ENCODE measurements at regions of chr4 and their contacts with region 1.

Region 1: DNA sequence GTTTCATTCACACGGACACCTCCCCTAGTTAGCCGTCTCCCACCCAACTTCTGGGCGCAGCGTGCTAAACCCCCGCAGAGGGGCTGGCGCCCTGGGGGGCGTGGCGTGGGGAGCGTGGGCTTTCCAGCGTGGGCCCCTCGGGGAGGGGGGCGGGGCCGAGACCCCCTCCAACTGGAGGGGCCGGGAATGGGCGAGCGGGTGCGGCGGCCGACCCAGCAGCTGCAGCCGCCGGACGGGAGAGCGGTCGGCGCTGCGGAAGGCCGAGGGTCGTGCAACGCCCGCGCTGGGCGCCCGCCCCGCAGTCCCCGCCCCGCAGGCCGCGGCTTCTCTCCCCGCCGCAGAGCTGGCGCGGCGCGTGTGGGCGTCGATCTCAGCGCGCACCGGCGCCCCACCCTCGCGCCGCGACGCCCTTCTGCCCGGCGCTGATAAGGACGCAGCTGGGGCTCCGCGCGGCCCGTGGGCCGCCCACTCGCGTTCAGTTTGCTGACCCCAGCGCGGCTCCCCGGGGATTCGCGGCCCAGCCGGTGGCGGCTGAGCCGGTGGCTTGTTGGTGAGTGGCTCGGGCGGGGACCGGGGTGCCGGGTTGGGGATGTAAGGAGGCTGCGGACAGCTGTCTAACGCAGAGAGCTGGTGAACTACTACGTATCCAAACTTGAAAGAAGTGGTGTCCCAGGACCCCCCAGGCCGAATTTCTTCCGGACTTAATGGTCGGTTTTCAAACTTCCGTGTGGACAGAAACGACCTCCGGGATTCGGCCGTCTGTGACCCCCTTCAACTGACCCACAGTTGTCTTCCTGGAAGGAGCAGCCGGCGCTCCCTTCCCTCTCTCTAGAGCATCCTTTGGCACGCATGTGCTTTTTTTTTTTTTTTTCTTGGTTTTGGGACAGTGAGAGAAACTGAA is 1.5 kb downstream of the FHDC1 start:
- DNase-seq: peak; percentile 35
- ATAC-seq: no peak
- H3K4me3 Mint-ChIP-seq: peak overlapping the region; percentile 59
- H3K27ac Mint-ChIP-seq: no peak overlapping the region
- H3K4me1 Mint-ChIP-seq: peaks cover 15% of the 10 kb centered on the region
- H3K27me3 Mint-ChIP-seq: peaks cover 48% of the 10 kb centered on the region

Region 2: DNA sequence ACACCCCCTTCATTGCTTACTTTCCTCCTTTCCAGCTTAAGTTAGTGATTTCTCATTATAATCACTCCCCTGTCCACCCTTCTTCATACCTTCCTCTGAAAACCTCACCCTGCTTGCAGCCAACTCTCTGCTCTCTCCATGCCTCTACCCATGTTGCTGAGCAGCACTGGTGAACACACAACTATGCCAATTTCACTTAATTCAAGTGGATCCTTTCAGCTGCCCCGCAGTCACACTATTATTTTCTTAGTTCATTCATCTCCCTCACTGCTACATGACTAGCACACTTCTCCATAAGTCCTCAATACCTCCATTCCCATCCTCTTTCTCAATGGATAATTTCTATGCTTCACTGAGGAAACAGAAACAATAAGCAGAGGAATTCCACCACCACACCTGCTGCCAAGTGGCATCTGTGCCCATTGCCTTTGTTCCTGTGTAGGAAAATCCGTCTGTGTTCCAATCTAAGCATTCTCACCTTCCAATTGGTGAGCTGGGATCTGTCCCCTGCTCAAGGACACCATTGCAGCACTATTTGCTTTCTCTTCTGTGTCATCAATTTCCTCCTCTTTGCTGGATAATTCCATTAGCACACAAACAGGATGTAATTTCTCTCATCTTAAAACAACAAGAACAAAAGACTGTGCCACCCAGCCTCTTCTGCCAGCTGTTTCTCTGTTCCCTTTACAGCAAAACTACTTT is 1685.8 kb before region 1 on chr4:
- CTCF ChIA-PET with region 1: no interaction called
- POLR2A ChIA-PET with region 1: no interaction called
- intact Hi-C with region 1: no loop called
- DNase-seq: no peak
- ATAC-seq: no peak
- H3K4me3 Mint-ChIP-seq: no peak overlapping the region
- H3K27ac Mint-ChIP-seq: no peak overlapping the region
- H3K4me1 Mint-ChIP-seq: no peaks in the 10 kb centered on the region
- H3K27me3 Mint-ChIP-seq: peaks cover 6% of the 10 kb centered on the region

Region 3: GRCh38 chr4:151408630-151409469 is 1528.7 kb before region 1 on chr4 and contains the start of gene FHIP1A:
- CTCF ChIA-PET with region 1: no interaction called
- POLR2A ChIA-PET with region 1: no interaction called
- intact Hi-C with region 1: loop called in 1 of 2 experiments (anchors 5 kb)
- DNase-seq: peak; percentile 87
- ATAC-seq: peak; percentile 91
- H3K4me3 Mint-ChIP-seq: peak within 1 kb of the TSS; percentile 83
- H3K27ac Mint-ChIP-seq: peak within 1 kb of the TSS; percentile 64
- H3K4me1 Mint-ChIP-seq: peaks cover 18% of the 10 kb centered on the region
- H3K27me3 Mint-ChIP-seq: peaks cover 32% of the 10 kb centered on the region
- total RNA-seq, gene FHIP1A: 0.19 to 0.39 TPM

Region 4: GRCh38 chr4:152850377-152850776 is 87.2 kb before region 1 on chr4:
- CTCF ChIA-PET with region 1: no interaction called
- POLR2A ChIA-PET with region 1: no interaction called
- intact Hi-C with region 1: loop called in 1 of 2 experiments (anchors 2 kb)
- DNase-seq: peak; percentile 64
- ATAC-seq: peak; percentile 69
- H3K4me3 Mint-ChIP-seq: no peak overlapping the region
- H3K27ac Mint-ChIP-seq: peak overlapping the region; percentile 40
- H3K4me1 Mint-ChIP-seq: peaks cover 22% of the 10 kb centered on the region
- H3K27me3 Mint-ChIP-seq: no peaks in the 10 kb centered on the region

Measured in activated CD4-positive, alpha-beta T cell treated with anti-CD3 and anti-CD28 coated beads for 36 hours (primary cell).